CD8-positive, alpha-beta T cell (primary cell): ENCODE measurements at regions of chr19 and their contacts with region 1.

Region 1: GRCh38 chr19:53879140-53880081 is 2.6 kb upstream of the PRKCG start:
- DNase-seq: peak; percentile 70 to 89 (median 79)
- ATAC-seq: peak; percentile 80
- H3K4me3 ChIP-seq: peak overlapping the region; percentile 53 to 55
- H3K4me3 Mint-ChIP-seq: no peak overlapping the region
- H3K27ac ChIP-seq: no peak overlapping the region
- H3K27ac Mint-ChIP-seq: no peak overlapping the region
- H3K4me1 ChIP-seq: peaks cover 76% of the 10 kb centered on the region
- H3K4me1 Mint-ChIP-seq: peaks cover 50% of the 10 kb centered on the region
- H3K27me3 ChIP-seq: peaks cover 36 to 39% of the 10 kb centered on the region in 2 experiments
- H3K27me3 Mint-ChIP-seq: peaks cover 11% of the 10 kb centered on the region
- CTCF ChIP-seq: no peak

Region 2: DNA sequence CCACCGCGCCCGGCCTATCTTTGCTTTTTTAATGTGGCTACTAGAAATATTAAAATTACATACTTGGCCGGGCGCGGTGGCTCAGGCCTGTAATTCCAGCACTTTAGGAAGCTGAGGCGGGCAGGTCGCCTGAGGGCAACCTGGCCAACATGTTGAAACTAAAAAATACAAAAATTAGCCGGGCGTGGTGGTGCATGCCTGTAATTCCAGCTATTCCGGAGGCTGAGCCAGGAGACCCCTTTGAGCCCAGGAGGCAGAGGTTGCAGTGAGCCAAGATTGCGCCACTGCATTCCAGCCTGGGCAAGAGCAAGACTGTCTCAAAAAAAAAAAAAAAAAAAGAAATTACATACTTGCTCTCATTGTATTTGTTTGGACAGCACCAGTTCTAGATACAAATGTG is 282.4 kb before region 1 on chr19:
- CTCF ChIA-PET with region 1: no interaction called
- POLR2A ChIA-PET with region 1: no interaction called
- intact Hi-C with region 1: no loop called
- DNase-seq: no peak
- ATAC-seq: no peak
- H3K4me3 ChIP-seq: no peak overlapping the region
- H3K4me3 Mint-ChIP-seq: no peak overlapping the region
- H3K27ac ChIP-seq: no peak overlapping the region
- H3K27ac Mint-ChIP-seq: no peak overlapping the region
- H3K4me1 ChIP-seq: no peaks in the 10 kb centered on the region
- H3K4me1 Mint-ChIP-seq: no peaks in the 10 kb centered on the region
- H3K27me3 ChIP-seq: no peaks in the 10 kb centered on the region
- H3K27me3 Mint-ChIP-seq: no peaks in the 10 kb centered on the region
- CTCF ChIP-seq: no peak

Region 3: DNA sequence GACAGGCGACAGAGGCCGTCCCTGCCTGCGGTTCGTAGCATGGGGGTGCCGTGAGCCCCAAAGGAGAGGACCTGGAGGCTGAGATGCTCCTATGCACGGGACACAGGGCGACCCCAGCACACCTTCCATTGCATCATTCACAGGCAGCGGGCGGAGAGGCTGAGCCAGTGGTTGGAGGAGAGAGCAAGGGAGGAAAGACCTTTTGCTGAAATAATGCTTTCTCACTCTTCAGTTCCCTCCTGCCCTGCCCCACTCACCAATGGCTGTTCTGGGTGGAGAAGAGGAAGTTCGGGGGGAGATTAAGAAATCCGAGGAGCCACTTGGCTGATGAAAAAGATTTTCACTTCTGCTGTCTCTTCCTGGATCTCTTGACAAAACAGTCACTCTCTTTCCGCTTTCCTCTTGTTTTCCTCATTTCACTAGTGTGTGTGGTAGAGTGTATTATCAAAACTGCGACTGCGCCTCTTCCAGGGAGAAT is 55.2 kb before region 1 on chr19 and contains the start of gene NLRP12:
- CTCF ChIA-PET with region 1: no interaction called
- POLR2A ChIA-PET with region 1: no interaction called
- intact Hi-C with region 1: no loop called
- DNase-seq: peak in 1 of 9 experiments; percentile 24
- ATAC-seq: no peak
- H3K4me3 ChIP-seq: no peak within 1 kb of the TSS
- H3K4me3 Mint-ChIP-seq: no peak within 1 kb of the TSS
- H3K27ac ChIP-seq: no peak within 1 kb of the TSS
- H3K27ac Mint-ChIP-seq: no peak within 1 kb of the TSS
- H3K4me1 ChIP-seq: no peaks in the 10 kb centered on the region
- H3K4me1 Mint-ChIP-seq: no peaks in the 10 kb centered on the region
- H3K27me3 ChIP-seq: no peaks in the 10 kb centered on the region
- H3K27me3 Mint-ChIP-seq: peaks cover 36% of the 10 kb centered on the region
- CTCF ChIP-seq: no peak
- total RNA-seq, gene NLRP12: not detected

Region 4: GRCh38 chr19:53853707-53854106 is 25.7 kb before region 1 on chr19:
- CTCF ChIA-PET with region 1: interaction called, 27 read pairs
- POLR2A ChIA-PET with region 1: interaction called, 4 read pairs
- intact Hi-C with region 1: loop called (anchors 1 kb)
- DNase-seq: no peak
- ATAC-seq: no peak
- H3K4me3 ChIP-seq: no peak overlapping the region
- H3K4me3 Mint-ChIP-seq: no peak overlapping the region
- H3K27ac ChIP-seq: no peak overlapping the region
- H3K27ac Mint-ChIP-seq: no peak overlapping the region
- H3K4me1 ChIP-seq: no peaks in the 10 kb centered on the region
- H3K4me1 Mint-ChIP-seq: peaks cover 6% of the 10 kb centered on the region
- H3K27me3 ChIP-seq: peaks cover 0 to 3% of the 10 kb centered on the region in 2 experiments
- H3K27me3 Mint-ChIP-seq: peaks cover 22% of the 10 kb centered on the region
- CTCF ChIP-seq: no peak

Region 5: DNA sequence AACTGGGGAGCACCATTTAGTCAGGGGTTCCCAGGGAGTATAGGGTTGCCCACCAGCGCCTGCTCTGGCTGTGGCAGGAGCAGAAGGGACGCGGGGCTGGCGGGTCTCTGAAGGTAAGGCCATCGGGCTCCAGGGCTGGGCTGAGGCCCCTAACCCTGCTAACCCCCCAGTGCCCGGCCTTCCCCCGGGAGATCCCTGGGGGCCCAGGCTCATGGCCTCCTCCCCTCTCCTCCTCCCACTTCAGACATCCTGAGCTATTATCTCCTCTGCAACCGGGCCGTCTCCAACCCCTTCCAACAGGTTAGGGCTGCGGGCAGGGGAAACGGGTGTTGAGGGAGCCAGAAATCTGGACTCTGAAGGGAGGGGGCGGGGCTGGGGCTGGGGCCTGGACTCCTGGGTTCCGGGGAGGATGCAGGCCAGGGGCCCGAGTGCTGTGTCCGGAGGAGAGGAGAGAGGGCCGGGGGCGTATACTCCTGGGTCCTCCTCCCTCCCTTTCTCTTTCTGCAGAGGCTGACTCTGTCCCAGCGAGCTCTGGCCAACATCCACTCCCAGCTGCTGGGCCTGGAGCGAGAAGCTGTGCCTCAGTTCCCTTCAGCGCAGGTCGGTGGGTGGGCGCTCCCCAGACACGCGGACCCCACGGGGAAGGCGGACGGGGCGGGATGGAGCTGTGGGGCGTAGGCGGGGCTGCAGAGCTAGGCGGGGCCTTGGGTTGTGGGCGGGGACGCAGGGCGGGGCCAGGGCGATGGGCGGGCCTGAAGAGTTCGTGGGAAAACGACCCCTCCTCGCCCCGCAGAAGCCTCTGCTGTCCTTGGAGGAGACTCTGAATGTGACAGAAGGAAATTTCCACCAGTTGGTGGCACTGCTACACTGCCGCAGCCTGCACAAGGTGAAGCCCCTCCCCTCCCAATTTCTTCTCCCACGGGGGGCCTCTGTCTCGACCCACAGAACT is 551.2 kb after region 1 on chr19:
- CTCF ChIA-PET with region 1: no interaction called
- POLR2A ChIA-PET with region 1: no interaction called
- intact Hi-C with region 1: no loop called
- DNase-seq: peak in 7 of 9 experiments; percentile 17 to 60 (median 44)
- ATAC-seq: peak; percentile 94
- H3K4me3 ChIP-seq: peak overlapping the region; percentile 12 to 41
- H3K4me3 Mint-ChIP-seq: peak overlapping the region; percentile 57
- H3K27ac ChIP-seq: no peak overlapping the region
- H3K27ac Mint-ChIP-seq: peak overlapping the region; percentile 32
- H3K4me1 ChIP-seq: peaks cover 21% of the 10 kb centered on the region
- H3K4me1 Mint-ChIP-seq: peaks cover 16% of the 10 kb centered on the region
- H3K27me3 ChIP-seq: peaks cover 0 to 9% of the 10 kb centered on the region in 2 experiments
- H3K27me3 Mint-ChIP-seq: peaks cover 25% of the 10 kb centered on the region
- CTCF ChIP-seq: peak; percentile 13